Common myeloid progenitor, CD34-positive (primary cell): ENCODE measurements at regions of chr4 and their contacts with region 1.

Region 1: GRCh38 chr4:86032476-86033022 is 327.3 kb downstream of the MAPK10 start:
- DNase-seq: peak in 2 of 3 donors; percentile 29 to 45
- H3K4me3 ChIP-seq: peak overlapping the region in 2 of 7 experiments; percentile 17 to 19
- H3K27ac ChIP-seq: no peak overlapping the region
- H3K4me1 ChIP-seq: peaks cover 6 to 37% (median 24%) of the 10 kb centered on the region in 4 experiments
- H3K27me3 ChIP-seq: no peaks in the 10 kb centered on the region

Region 2: GRCh38 chr4:86043755-86044592 is 11.4 kb after region 1 on chr4:
- CTCF ChIA-PET with region 1: interaction called, 12 read pairs
- POLR2A ChIA-PET with region 1: no interaction called
- DNase-seq: peak; percentile 33 to 62 (median 53)
- H3K4me3 ChIP-seq: peak overlapping the region in 2 of 7 experiments; percentile 37 to 45
- H3K27ac ChIP-seq: no peak overlapping the region
- H3K4me1 ChIP-seq: peaks cover 0 to 4% (median 0%) of the 10 kb centered on the region in 4 experiments
- H3K27me3 ChIP-seq: no peaks in the 10 kb centered on the region